ENCODE measurements at regions of chr7 and their contacts with region 1.

Region 1: DNA sequence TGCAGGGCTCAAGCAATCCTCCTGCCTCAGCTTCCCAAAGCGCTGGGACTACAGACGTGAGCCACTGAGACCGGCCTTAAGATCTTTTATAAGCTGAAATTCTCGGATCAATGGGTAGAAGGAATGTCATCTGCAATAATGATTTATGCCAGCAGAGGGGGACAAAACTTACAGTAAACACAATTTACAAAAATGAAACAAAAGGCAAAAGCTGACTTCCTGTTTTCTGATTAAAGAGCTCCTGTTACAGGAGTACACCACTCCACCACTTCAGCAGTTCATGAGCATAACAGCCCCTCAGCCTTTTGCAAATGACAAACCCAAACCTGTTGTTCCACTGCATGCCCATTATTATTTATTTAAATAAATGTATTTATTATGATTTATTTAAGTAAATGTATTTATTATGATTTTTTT is 88.5 kb upstream of the ATP6V0A4 start:
- DNase-seq: peak; percentile 59
- H3K4me3 Mint-ChIP-seq: no peak overlapping the region
- H3K27ac Mint-ChIP-seq: no peak overlapping the region
- H3K4me1 Mint-ChIP-seq: peaks cover 42% of the 10 kb centered on the region
- H3K27me3 Mint-ChIP-seq: no peaks in the 10 kb centered on the region
- CTCF ChIP-seq: peak; percentile 46

Region 2: DNA sequence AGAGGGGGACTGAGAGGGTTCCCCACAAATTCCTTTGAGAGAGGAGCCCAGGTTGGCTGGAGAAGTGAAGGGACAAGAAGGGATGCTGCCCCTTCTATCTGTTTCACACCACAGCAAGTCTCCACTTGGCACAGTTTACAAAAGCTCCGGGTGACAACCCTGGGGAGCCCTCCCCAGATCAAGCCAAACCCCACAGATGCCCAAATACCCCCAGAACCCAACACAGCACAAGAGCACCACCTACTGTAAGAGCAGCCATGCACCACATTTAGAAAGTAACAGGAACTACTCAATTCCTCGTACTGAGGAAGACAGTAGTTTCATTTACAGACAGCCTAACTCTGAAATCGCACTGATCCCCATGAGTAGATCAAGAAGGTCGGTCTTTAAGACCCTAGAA is 20.7 kb before region 1 on chr7:
- CTCF ChIA-PET with region 1: no interaction called
- intact Hi-C with region 1: no loop called
- DNase-seq: peak; percentile 65
- H3K4me3 Mint-ChIP-seq: no peak overlapping the region
- H3K27ac Mint-ChIP-seq: no peak overlapping the region
- H3K4me1 Mint-ChIP-seq: peaks cover 24% of the 10 kb centered on the region
- H3K27me3 Mint-ChIP-seq: no peaks in the 10 kb centered on the region
- CTCF ChIP-seq: peak; percentile 54

Region 3: DNA sequence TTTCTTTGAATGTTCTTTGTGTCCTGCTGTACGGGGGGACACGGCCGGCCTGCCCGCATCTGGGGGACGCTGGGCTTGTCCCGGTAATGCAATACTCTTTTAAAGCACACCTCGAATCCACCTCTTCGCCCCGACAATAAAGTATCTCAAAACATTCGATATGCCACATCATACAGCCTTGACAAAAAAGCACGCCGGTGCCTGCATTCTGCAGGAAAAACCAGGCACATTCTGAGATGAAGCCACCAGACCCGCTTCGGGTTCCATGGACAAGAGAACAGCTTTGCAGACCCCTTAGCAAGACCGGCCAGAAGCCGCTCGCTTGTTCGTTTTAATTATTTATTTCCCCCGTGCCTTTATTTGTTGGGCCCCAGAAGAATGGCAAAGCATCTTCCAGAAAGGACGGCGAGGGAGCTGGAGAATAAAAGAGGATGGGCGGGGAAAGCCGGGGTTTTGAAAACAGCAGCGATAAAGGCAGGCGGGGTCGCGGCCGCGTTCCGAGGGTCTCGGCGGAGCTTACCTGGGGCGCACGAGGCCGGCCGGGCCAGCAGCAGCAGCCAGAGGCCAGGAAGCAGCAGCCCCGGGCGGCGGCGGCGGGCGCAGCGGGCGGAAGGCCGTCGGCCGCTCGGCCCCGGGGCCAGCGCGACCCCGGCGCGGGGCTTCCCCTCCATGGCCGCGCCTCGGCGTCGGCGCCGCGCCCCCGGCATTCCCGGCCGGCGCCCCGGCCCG is 94.2 kb after region 1 on chr7:
- CTCF ChIA-PET with region 1: interaction called, 5 read pairs
- intact Hi-C with region 1: loop called (anchors 1 kb)
- DNase-seq: no peak
- H3K4me3 Mint-ChIP-seq: peak overlapping the region; percentile 86
- H3K27ac Mint-ChIP-seq: peak overlapping the region; percentile 81
- H3K4me1 Mint-ChIP-seq: peaks cover 33% of the 10 kb centered on the region
- H3K27me3 Mint-ChIP-seq: no peaks in the 10 kb centered on the region
- CTCF ChIP-seq: no peak

Region 4: GRCh38 chr7:139075031-139075652 is 188.6 kb after region 1 on chr7:
- CTCF ChIA-PET with region 1: interaction called, 5 read pairs
- intact Hi-C with region 1: loop called (anchors 10 kb)
- DNase-seq: peak; percentile 65
- H3K4me3 Mint-ChIP-seq: no peak overlapping the region
- H3K27ac Mint-ChIP-seq: no peak overlapping the region
- H3K4me1 Mint-ChIP-seq: no peaks in the 10 kb centered on the region
- H3K27me3 Mint-ChIP-seq: no peaks in the 10 kb centered on the region
- CTCF ChIP-seq: no peak

Measured in Calu3 (cell line).